Breast epithelium (tissue), 4 donors: ENCODE measurements at regions of chr1 and their contacts with region 1.

Region 1: DNA sequence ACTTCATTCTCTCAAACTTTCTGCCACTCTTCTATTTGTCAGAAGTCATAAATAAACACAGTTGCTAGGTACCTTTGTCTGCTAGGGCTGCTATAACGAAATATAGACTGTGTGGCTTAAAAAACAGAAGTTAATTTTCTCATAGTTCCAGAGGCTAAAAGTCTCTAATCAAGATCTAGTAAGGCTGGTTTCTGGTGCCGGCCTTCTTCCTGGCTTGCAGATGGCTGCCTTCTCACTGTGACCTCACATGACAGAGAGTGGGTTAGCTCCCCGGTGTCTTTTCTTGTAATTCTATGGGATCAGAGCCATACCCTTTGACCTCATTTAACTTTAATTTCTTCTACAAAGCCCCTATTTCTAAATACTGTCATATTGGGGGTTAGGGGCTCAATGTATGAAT is 5.9 kb downstream of the PDC start:
- DNase-seq: no peak
- H3K4me3 ChIP-seq: no peak overlapping the region
- H3K27ac ChIP-seq: no peak overlapping the region
- H3K4me1 ChIP-seq: no peaks in the 10 kb centered on the region
- H3K27me3 ChIP-seq: no peaks in the 10 kb centered on the region
- CTCF ChIP-seq: no peak
- POLR2A ChIP-seq: no peak

Region 2: GRCh38 chr1:186165303-186165702 is 289.7 kb before region 1 on chr1:
- intact Hi-C with region 1: no loop called
- DNase-seq: no peak
- H3K4me3 ChIP-seq: no peak overlapping the region
- H3K27ac ChIP-seq: no peak overlapping the region
- H3K4me1 ChIP-seq: no peaks in the 10 kb centered on the region
- H3K27me3 ChIP-seq: no peaks in the 10 kb centered on the region
- CTCF ChIP-seq: no peak
- POLR2A ChIP-seq: no peak

Region 3: GRCh38 chr1:186330758-186331157 is 124.2 kb before region 1 on chr1:
- intact Hi-C with region 1: no loop called
- DNase-seq: no peak
- H3K4me3 ChIP-seq: no peak overlapping the region
- H3K27ac ChIP-seq: no peak overlapping the region
- H3K4me1 ChIP-seq: no peaks in the 10 kb centered on the region
- H3K27me3 ChIP-seq: no peaks in the 10 kb centered on the region
- CTCF ChIP-seq: peak in 1 of 3 donors; percentile 6
- POLR2A ChIP-seq: no peak

Region 4: GRCh38 chr1:186887203-186887602 is 432.2 kb after region 1 on chr1:
- intact Hi-C with region 1: loop called (anchors 5 kb)
- DNase-seq: no peak
- H3K4me3 ChIP-seq: no peak overlapping the region
- H3K27ac ChIP-seq: no peak overlapping the region
- H3K4me1 ChIP-seq: no peaks in the 10 kb centered on the region
- H3K27me3 ChIP-seq: no peaks in the 10 kb centered on the region
- CTCF ChIP-seq: no peak
- POLR2A ChIP-seq: no peak